Mammary epithelial cell (primary cell): ENCODE measurements at regions of chr2 and their contacts with region 1.

Region 1: DNA sequence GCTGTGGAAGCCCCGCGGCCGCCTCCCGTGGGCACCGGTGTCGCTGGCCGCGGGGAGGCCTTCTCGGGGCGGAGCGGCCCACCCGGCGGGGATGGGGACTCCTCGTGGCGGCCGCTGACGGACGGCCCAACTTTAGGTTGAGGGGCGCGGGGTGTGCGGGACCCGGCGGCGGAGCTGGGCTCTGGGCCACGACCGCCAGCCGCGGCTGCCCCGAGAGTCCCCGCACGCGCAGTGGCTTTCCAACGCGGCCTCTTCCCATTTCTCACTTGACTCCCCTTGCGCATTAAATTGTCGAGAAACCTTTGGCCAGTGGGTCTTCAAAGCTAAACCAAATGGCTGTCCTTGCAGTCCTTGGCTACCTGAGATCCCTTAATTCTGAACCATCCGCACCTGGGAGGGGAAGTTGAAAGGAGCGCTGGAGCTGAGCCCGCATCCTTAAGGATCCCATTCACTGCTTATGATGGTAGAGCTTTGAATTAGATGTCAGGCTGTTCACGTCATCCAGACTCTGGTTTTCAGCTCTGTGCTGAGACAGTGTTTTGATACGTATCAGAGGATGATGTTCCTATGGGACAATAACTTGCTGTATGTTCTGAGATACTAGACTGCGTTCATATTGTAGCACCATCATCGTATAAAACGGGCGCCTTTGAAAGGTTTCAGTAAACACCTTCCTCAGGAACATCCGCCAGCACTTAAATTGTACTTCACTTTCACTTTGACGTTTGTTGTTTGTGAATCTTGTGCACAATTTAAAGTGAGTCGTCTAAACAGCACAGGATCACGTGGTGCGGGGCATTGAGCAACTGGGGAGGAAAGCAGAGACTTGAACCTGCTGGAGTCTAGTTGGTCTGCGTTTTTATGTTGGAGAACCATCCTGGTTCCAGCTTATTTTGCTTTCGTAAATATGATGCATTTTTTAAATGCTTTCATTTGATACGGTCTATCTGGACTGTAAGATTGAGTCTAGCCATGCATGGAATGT is 874 bp downstream of the CLIP4 start:
- DNase-seq: peak; percentile 85
- H3K4me3 ChIP-seq: peak overlapping the region; percentile 53 to 80 (median 56)
- H3K27ac ChIP-seq: peak overlapping the region; percentile 99
- H3K4me1 ChIP-seq: peaks cover 64% of the 10 kb centered on the region
- H3K27me3 ChIP-seq: no peaks in the 10 kb centered on the region
- CTCF ChIP-seq: no peak

Region 2: GRCh38 chr2:28976584-28976983 is 139.5 kb before region 1 on chr2:
- CTCF ChIA-PET with region 1: no interaction called
- dilution Hi-C with region 1: no loop called
- in situ Hi-C with region 1: no loop called
- intact Hi-C with region 1: loop called (anchors 5 kb)
- DNase-seq: peak; percentile 92
- H3K4me3 ChIP-seq: no peak overlapping the region
- H3K27ac ChIP-seq: no peak overlapping the region
- H3K4me1 ChIP-seq: peaks cover 21% of the 10 kb centered on the region
- H3K27me3 ChIP-seq: no peaks in the 10 kb centered on the region
- CTCF ChIP-seq: no peak

Region 3: DNA sequence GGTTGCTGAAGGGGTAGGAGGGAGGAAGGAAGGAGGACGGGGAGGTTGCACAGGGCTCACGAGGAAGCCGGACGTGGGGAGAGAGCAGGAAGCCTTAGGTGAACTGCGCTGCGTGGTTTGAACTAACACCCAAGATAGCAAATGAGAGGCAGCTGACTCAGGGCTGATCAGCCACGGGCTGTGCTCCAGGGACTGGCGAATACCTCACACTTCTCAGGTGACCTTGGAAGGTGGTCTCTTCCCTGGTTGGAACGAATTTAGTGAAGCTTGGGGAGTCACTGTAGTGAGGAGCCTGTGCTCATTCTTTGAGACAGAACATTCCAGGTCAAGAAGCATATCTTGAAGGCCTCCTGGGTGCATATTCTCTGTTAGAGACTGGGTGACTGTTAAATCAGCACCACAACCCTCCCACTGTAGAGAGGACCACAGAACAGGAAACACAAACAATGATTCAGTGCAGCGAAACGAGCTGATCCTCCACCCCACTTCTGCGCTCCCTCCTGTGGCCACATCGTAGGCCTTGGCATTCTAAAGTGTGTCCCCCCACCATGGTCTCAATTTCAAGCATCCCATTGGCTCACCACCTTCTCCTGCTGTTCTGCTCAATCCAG is 101.2 kb before region 1 on chr2:
- CTCF ChIA-PET with region 1: no interaction called
- dilution Hi-C with region 1: no loop called
- in situ Hi-C with region 1: no loop called
- intact Hi-C with region 1: no loop called
- DNase-seq: peak; percentile 34
- H3K4me3 ChIP-seq: no peak overlapping the region
- H3K27ac ChIP-seq: no peak overlapping the region
- H3K4me1 ChIP-seq: no peaks in the 10 kb centered on the region
- H3K27me3 ChIP-seq: no peaks in the 10 kb centered on the region
- CTCF ChIP-seq: no peak

Region 4: DNA sequence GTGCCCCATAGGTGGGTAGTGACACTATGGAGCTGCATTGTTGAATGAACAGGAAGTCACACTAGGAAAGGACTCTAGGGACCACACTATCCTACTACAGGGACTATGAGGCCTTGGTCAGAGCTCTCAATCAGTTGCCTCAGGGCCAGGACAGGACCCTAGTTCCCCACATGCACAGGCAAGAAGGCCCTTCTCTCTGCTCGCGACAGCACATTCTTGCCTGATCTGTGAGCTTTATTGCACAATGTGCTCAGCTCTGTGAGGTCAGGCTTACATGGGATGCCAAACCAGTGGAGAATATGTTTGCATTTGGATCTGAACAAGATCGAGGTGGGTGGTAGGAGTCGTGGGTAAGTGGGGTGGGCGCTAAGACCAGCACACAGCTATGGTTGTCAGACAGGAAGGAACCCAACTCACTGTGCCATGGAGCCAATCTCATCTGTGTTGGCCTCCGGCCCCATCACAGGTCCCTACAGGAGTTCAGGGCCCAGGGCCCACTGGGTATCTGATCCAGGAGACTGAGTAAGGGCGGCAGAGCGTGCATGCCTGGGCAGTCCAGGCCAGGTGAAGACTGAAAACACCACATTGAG is 49.7 kb before region 1 on chr2:
- CTCF ChIA-PET with region 1: interaction called, 10 read pairs
- dilution Hi-C with region 1: no loop called
- in situ Hi-C with region 1: loop called in 1 of 2 experiments (anchors 5 kb)
- intact Hi-C with region 1: loop called (anchors 1 kb)
- DNase-seq: peak; percentile 68
- H3K4me3 ChIP-seq: no peak overlapping the region
- H3K27ac ChIP-seq: peak overlapping the region; percentile 51
- H3K4me1 ChIP-seq: peaks cover 56% of the 10 kb centered on the region
- H3K27me3 ChIP-seq: no peaks in the 10 kb centered on the region
- CTCF ChIP-seq: no peak

Region 5: GRCh38 chr2:29130295-29130694 is 14.2 kb after region 1 on chr2:
- CTCF ChIA-PET with region 1: interaction called, 3 read pairs
- dilution Hi-C with region 1: no loop called
- in situ Hi-C with region 1: no loop called
- intact Hi-C with region 1: loop called (anchors 1 kb)
- DNase-seq: peak; percentile 92
- H3K4me3 ChIP-seq: peak overlapping the region in 2 of 3 experiments; percentile 10 to 22
- H3K27ac ChIP-seq: peak overlapping the region; percentile 83
- H3K4me1 ChIP-seq: peaks cover 39% of the 10 kb centered on the region
- H3K27me3 ChIP-seq: no peaks in the 10 kb centered on the region
- CTCF ChIP-seq: no peak